IMR-90 (cell line): ENCODE measurements at regions of chr19 and their contacts with region 1.

Region 1: DNA sequence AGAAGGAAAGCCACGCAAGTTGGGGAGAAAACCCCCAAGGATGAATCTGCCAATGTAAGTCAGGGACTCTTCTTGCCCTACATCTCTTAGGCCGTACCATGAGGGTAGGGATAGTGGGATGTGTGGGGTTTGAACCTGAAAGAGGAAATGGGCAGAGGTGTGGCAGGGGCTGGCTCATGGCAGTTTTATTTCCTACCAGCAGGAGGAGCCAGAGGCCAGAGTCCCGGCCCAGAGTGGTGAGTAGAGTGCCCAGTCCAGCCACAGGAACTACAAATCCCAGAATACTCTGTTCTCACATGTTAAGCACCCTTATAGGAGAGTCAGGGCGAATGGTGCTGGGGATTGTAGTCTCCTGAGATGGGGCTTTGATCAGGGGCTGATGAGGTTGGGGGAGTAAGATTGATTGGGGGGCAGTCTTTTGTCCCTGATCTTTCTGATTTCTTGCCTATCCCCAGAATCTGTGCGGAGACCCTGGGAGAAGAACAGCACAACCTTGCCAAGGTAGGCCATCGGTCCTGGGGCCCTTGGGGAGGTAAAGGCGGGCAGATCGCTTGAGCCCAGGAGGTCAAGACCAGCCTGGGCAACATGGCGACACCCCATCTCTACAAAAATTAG is 16.5 kb downstream of the VASP start:
- DNase-seq: peak; percentile 80
- ATAC-seq: peak; percentile 92
- H3K4me3 ChIP-seq: no peak overlapping the region
- H3K27ac ChIP-seq: no peak overlapping the region
- H3K4me1 ChIP-seq: peaks cover 2% of the 10 kb centered on the region; the same call in 1 of the 2 replicates
- H3K27me3 ChIP-seq: no peaks in the 10 kb centered on the region
- CTCF ChIP-seq: peak; percentile 93
- POLR2A ChIP-seq: no peak
- RAD21 ChIP-seq: peak; percentile 93

Region 2: DNA sequence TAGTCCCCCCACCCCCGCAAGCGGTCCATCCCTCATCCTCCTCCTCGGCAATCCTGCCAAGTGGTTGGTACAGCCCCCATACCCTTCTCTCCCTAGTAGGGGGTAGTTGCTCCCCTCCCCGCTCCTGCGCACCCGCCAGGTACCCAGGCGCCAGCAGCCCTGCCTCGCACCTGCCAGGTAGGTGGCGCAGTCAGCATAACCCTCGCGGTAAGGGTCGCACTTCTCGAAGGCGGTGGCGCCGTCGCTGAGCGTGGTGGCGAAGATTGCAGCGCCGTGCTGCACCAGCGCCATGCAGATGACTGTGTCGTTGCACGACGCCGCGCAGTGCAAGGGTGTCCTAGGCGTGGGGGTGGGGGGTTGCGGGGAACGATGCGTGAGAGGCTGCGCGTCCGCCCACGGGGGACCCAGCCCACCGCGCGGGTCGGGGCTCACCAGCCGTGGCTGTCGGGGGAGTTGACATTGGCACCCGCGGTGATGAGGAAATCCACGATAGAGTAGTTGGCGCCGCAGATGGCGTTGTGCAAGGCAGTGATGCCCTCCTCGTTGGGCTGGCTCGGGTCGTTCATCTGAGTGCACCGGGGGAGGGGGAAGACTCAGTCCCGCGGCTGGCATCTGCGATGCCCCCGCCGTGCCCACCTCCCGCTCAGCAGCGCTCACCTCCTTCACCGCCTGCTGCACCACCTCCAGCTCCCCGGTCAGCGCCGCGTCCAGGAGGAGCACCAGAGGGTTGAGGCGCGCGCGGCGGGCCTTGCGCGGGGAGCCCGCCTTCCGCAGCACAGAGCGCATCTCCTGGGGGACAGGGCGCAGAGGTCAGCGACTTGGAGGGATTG is 138.1 kb before region 1 on chr19:
- CTCF ChIA-PET with region 1: no interaction called
- POLR2A ChIA-PET with region 1: no interaction called
- dilution Hi-C with region 1: no loop called
- in situ Hi-C with region 1: no loop called
- intact Hi-C with region 1: no loop called
- DNase-seq: no peak
- ATAC-seq: peak; percentile 35; the same call in 1 of the 2 replicates
- H3K4me3 ChIP-seq: no peak overlapping the region
- H3K27ac ChIP-seq: no peak overlapping the region
- H3K4me1 ChIP-seq: peaks cover 5% of the 10 kb centered on the region
- H3K27me3 ChIP-seq: no peaks in the 10 kb centered on the region
- CTCF ChIP-seq: no peak
- POLR2A ChIP-seq: no peak
- RAD21 ChIP-seq: no peak

Region 3: DNA sequence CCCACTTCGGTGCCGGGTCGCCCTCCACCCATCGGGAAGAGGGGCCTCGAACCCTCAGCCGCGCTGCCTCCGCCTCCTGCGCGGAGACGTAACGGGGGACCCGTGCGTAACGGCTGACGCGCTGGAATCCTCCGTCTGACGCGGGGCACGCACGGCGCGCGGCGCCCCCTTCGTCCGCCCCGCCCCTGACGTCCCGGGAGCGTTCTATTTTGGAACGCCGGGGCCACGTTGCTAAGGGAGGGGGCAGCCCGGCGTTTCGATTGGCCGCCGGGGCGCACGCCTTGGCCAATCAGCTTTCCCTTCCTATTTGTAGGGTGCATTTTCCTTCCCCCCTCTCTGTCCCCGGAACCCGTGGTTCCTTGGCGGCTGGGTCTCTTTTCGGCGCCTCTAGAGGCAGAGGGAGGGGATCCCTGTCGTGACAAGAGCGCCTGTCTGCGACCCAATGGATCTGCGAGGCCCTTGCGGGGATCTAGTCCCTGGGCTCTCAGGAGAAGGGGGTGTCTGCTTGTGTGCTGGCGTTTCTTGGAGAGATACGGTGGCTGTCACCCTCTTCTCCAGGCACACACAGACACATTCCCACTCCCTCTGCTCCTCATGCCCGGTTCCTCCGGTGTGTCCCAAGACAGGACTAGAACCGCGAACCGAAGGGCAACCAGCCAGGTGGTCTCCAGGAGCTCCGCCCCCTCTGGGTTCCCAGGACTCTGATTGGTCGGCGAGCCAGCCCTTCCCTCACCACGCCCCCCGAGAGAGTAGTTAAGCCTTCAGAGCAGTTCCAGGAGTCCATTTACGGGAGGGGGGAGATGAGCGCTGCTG is 54.4 kb before region 1 on chr19:
- CTCF ChIA-PET with region 1: no interaction called
- POLR2A ChIA-PET with region 1: no interaction called
- dilution Hi-C with region 1: no loop called
- in situ Hi-C with region 1: no loop called
- intact Hi-C with region 1: no loop called
- DNase-seq: peak; percentile 92
- ATAC-seq: peak; percentile 90
- H3K4me3 ChIP-seq: peak overlapping the region; percentile 76
- H3K27ac ChIP-seq: peak overlapping the region; percentile 53
- H3K4me1 ChIP-seq: peaks cover 13% of the 10 kb centered on the region
- H3K27me3 ChIP-seq: no peaks in the 10 kb centered on the region
- CTCF ChIP-seq: no peak
- POLR2A ChIP-seq: no peak
- RAD21 ChIP-seq: no peak

Region 4: GRCh38 chr19:45558399-45558878 is 34.7 kb after region 1 on chr19:
- CTCF ChIA-PET with region 1: interaction called, 9 read pairs
- POLR2A ChIA-PET with region 1: no interaction called
- dilution Hi-C with region 1: no loop called
- in situ Hi-C with region 1: no loop called
- intact Hi-C with region 1: loop called (anchors 5 kb)
- DNase-seq: peak; percentile 33
- ATAC-seq: peak; percentile 84
- H3K4me3 ChIP-seq: no peak overlapping the region
- H3K27ac ChIP-seq: no peak overlapping the region
- H3K4me1 ChIP-seq: no peaks in the 10 kb centered on the region
- H3K27me3 ChIP-seq: no peaks in the 10 kb centered on the region
- CTCF ChIP-seq: peak; percentile 64
- POLR2A ChIP-seq: no peak
- RAD21 ChIP-seq: peak; percentile 71

Region 5: DNA sequence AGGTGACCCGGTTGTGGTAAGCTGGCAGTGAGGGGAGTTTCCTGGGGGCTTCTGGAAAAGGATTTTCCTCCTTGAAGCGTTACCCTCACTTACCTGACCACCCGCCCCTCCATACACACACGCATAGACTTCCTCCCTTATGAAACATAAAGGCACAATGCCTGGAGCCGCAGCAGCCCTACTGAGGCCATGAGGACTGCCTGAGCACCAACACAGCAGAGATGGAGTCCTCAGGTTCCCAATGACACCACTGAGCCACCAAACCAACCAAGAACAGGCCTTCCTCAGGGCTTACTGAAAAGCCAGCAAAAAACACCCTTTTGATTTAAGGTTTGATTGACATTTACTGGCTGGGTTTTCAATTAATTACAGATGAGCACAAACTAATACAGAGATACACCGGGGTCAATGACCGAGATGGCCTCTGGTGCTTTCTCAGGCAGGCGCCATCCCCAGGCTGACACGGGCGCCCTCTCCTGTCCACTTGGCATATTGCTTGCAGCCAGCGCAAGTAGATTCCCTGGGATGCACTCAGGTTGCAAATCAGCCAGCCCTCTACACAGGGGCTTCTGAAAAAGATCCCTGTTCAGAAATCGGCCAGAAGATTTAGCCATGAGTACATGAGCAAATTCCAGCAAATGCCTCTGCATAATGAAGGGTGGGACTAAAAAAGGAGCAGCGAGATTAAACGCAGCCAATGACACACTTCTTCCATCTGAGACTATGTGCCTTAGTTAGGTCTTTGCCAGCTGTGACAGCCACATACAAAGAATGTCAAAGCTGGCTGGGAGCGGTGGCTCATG is 46.1 kb after region 1 on chr19:
- CTCF ChIA-PET with region 1: no interaction called
- POLR2A ChIA-PET with region 1: no interaction called
- dilution Hi-C with region 1: no loop called
- in situ Hi-C with region 1: no loop called
- intact Hi-C with region 1: loop called (anchors 1 kb)
- DNase-seq: no peak
- ATAC-seq: peak; percentile 86
- H3K4me3 ChIP-seq: no peak overlapping the region
- H3K27ac ChIP-seq: no peak overlapping the region
- H3K4me1 ChIP-seq: peaks cover 6% of the 10 kb centered on the region; the same call in 1 of the 2 replicates
- H3K27me3 ChIP-seq: no peaks in the 10 kb centered on the region
- CTCF ChIP-seq: peak; percentile 66
- POLR2A ChIP-seq: no peak
- RAD21 ChIP-seq: peak; percentile 65